ENCODE measurements at regions of chr16 and their contacts with region 1.

Region 1: DNA sequence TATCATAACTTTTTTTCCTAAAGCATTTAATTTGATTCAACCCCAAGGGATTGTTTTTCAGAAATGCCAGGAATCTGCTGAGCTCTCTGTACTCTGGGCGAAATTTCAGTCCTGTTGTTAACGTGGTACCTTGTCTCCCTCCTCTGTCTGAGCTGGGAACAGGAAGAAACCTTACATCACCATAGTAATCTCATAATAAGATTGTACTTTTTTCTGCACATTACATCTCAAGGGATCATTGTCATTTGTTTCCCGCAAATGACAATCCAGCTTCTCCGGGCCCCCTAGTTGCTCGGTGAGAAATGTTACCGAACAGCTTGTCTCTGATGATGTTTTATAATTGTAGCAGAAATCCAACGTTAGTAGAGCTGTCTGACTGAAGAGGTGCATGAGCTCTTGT is 152.7 kb upstream of the ERCC4 start:
- DNase-seq: no peak
- H3K4me3 ChIP-seq: no peak overlapping the region
- H3K27ac ChIP-seq: no peak overlapping the region
- H3K4me1 ChIP-seq: no peaks in the 10 kb centered on the region
- H3K27me3 ChIP-seq: no peaks in the 10 kb centered on the region
- CTCF ChIP-seq: peak in 2 of 3 experiments; percentile 48 to 55; a peak in 3 of 4 replicates
- EP300 ChIP-seq: no peak
- POLR2A ChIP-seq: no peak
- RAD21 ChIP-seq: peak; percentile 74 to 79

Region 2: GRCh38 chr16:13756411-13757140 is 10.6 kb before region 1 on chr16:
- CTCF ChIA-PET with region 1: interaction called, 10 read pairs
- POLR2A ChIA-PET with region 1: no interaction called
- DNase-seq: no peak
- H3K4me3 ChIP-seq: no peak overlapping the region
- H3K27ac ChIP-seq: no peak overlapping the region
- H3K4me1 ChIP-seq: no peaks in the 10 kb centered on the region
- H3K27me3 ChIP-seq: no peaks in the 10 kb centered on the region
- CTCF ChIP-seq: no peak
- EP300 ChIP-seq: no peak
- POLR2A ChIP-seq: no peak
- RAD21 ChIP-seq: no peak

Region 3: DNA sequence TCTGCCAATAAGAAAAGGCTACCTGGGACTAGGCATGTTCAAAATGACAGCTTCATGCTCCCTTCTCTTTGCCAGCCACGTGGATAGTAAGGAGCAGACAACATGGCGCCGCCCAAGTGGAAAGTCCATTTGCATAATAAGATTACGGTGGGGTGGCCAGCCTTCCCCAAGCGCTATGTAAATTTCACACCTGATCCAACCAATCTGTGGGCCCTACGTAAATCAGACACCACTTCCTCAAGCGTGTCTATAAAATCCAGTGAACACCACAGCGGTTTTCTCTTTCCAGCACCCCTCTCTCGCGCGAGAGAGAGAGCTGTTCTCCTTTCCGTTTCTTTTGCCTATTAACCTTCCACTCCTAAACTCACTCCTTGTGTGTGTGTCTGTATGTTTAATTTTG is 12.5 kb after region 1 on chr16:
- CTCF ChIA-PET with region 1: interaction called, 14 read pairs
- POLR2A ChIA-PET with region 1: no interaction called
- DNase-seq: no peak
- H3K4me3 ChIP-seq: no peak overlapping the region
- H3K27ac ChIP-seq: no peak overlapping the region
- H3K4me1 ChIP-seq: peaks cover 0 to 11% (median 0%) of the 10 kb centered on the region in 4 experiments; a peak in 3 of 7 replicates
- H3K27me3 ChIP-seq: no peaks in the 10 kb centered on the region
- CTCF ChIP-seq: no peak
- EP300 ChIP-seq: no peak
- POLR2A ChIP-seq: no peak
- RAD21 ChIP-seq: no peak

Region 4: DNA sequence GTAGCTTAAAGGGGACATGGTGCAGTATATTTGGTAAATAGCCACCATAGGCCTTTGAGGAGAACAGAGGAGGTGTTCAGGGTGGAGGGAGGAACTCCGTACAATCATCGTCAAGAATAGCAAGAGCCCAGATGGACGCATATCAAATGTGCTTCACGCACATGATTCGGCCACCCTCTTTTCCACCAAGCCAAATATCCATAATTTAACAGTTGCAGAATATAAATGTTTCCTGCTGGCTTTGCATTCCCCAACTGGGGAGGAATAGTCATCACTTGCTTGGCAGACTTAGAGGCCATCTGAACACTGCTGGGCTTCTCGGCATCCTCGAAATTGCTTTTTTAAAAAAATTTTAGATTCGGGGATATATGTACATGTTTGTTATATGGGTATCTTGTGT is 40.9 kb after region 1 on chr16:
- CTCF ChIA-PET with region 1: no interaction called
- POLR2A ChIA-PET with region 1: no interaction called
- DNase-seq: no peak
- H3K4me3 ChIP-seq: no peak overlapping the region
- H3K27ac ChIP-seq: no peak overlapping the region
- H3K4me1 ChIP-seq: peaks cover 0 to 6% (median 0%) of the 10 kb centered on the region in 4 experiments; a peak in 1 of 7 replicates
- H3K27me3 ChIP-seq: no peaks in the 10 kb centered on the region
- CTCF ChIP-seq: no peak
- EP300 ChIP-seq: no peak
- POLR2A ChIP-seq: no peak
- RAD21 ChIP-seq: no peak

Region 5: DNA sequence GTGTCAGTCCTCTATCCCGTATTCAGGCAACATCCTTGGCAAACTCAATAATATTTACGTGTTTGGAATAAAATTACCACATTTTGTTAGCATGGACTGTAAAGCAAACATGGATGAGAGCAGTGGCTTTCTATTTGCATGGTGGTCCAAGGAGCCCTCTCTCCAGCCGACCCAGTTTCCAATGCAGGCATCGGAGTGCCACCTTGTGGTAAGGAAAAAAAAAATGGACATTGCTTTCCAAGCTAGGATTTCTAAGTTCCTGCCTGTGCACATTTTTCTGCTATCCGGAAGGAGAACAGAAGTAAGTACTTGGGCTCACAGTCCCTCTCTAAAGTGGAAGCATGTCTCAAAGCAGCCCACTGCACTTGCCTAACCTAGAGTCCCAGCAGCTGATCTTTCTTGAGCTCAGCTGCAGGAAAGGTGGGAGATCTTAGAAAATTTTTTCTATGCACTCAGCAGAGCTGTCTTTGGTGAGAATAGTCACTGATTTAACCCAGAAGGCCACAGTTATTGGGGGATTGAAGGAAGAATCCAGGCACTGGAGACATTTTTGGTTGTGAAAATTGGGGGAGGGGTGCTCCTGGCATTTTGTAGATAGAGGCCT is 106.7 kb after region 1 on chr16:
- CTCF ChIA-PET with region 1: interaction called, 11 read pairs
- POLR2A ChIA-PET with region 1: no interaction called
- DNase-seq: peak in 1 of 2 experiments; percentile 56
- H3K4me3 ChIP-seq: no peak overlapping the region
- H3K27ac ChIP-seq: no peak overlapping the region
- H3K4me1 ChIP-seq: no peaks in the 10 kb centered on the region
- H3K27me3 ChIP-seq: no peaks in the 10 kb centered on the region
- CTCF ChIP-seq: peak; percentile 50 to 74 (median 73)
- EP300 ChIP-seq: no peak
- POLR2A ChIP-seq: no peak
- RAD21 ChIP-seq: peak; percentile 88 to 91

Measured in H1 (cell line).